ENCODE measurements at regions of chr5 and their contacts with region 1.

Region 1: GRCh38 chr5:165410476-165410875 is 1905.1 kb downstream of the MAT2B start:
- DNase-seq: no peak
- H3K4me3 Mint-ChIP-seq: no peak overlapping the region
- H3K27ac Mint-ChIP-seq: no peak overlapping the region
- H3K4me1 Mint-ChIP-seq: no peaks in the 10 kb centered on the region
- H3K27me3 Mint-ChIP-seq: no peaks in the 10 kb centered on the region
- CTCF ChIP-seq: no peak

Region 2: DNA sequence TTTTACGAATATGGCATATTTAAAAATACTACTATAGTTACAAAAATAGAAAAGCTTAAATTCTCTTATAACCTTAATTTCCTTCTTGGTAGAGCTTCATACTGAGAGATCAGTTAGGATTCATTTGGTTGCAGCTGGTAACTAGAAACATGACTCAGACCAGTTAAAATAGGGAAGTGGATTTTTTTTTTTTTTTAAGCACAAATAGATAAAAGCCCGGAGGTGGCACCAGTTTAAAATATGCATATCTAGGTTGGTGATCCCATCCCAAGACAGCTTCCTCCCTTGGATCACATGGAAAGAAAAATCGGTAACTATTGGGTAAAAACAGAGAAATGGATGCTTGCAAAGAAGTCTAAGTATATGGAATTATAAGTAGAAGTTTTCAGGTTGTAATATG is 270.8 kb before region 1 on chr5:
- CTCF ChIA-PET with region 1: no interaction called
- intact Hi-C with region 1: no loop called
- DNase-seq: no peak
- H3K4me3 Mint-ChIP-seq: no peak overlapping the region
- H3K27ac Mint-ChIP-seq: no peak overlapping the region
- H3K4me1 Mint-ChIP-seq: no peaks in the 10 kb centered on the region
- H3K27me3 Mint-ChIP-seq: no peaks in the 10 kb centered on the region
- CTCF ChIP-seq: no peak

Region 3: GRCh38 chr5:165227511-165227910 is 183.0 kb before region 1 on chr5:
- CTCF ChIA-PET with region 1: no interaction called
- intact Hi-C with region 1: no loop called
- DNase-seq: peak; percentile 14
- H3K4me3 Mint-ChIP-seq: no peak overlapping the region
- H3K27ac Mint-ChIP-seq: no peak overlapping the region
- H3K4me1 Mint-ChIP-seq: no peaks in the 10 kb centered on the region
- H3K27me3 Mint-ChIP-seq: no peaks in the 10 kb centered on the region
- CTCF ChIP-seq: no peak

Region 4: DNA sequence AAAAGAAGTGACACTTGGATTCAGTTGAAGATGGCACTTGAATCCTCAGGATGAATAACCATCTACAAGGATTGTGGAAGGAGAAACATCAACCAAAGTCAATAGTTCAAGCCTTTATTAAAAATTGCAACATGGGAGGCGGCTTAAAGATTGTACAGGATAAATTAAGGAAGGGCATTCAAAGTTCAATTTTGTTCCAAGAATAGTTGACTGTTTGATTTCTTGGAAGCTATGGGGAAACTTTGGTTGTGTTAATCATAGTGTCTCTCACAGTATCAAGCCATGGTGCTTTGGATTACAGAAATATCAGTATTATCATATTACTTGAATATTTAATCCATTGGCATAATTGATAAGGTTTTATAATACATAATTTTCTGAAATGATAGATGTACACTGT is 60.7 kb before region 1 on chr5:
- CTCF ChIA-PET with region 1: no interaction called
- intact Hi-C with region 1: no loop called
- DNase-seq: no peak
- H3K4me3 Mint-ChIP-seq: no peak overlapping the region
- H3K27ac Mint-ChIP-seq: no peak overlapping the region
- H3K4me1 Mint-ChIP-seq: no peaks in the 10 kb centered on the region
- H3K27me3 Mint-ChIP-seq: no peaks in the 10 kb centered on the region
- CTCF ChIP-seq: no peak

Region 5: DNA sequence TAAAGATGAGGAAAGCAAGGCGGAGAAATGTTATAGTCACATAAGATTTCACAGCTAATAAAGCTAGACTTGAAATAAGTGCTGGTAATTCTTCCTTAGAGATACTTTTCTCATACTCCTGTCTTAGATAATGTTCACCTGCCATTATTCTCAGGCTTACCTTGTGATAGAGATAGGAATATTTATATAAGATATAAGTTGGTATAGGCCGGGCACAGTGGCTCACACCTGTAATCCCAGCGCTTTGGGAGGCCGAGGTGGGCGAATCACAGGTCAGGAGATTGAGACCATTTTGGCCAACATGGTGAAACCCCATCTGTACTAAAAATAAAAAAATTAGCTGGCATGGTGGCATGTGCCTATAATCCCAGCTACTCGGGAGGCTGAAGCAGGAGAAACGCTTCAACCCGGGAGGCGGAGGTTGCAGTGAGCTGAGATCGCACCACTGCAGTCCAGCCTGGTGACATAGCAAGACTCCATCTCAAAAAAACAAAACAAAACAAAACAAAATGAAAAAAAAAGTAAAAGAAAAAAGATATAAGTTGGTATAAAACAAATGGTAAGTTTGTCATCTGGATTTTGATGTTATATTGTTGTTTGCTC is 13.3 kb after region 1 on chr5:
- CTCF ChIA-PET with region 1: no interaction called
- intact Hi-C with region 1: loop called (anchors 1 kb)
- DNase-seq: no peak
- H3K4me3 Mint-ChIP-seq: no peak overlapping the region
- H3K27ac Mint-ChIP-seq: no peak overlapping the region
- H3K4me1 Mint-ChIP-seq: no peaks in the 10 kb centered on the region
- H3K27me3 Mint-ChIP-seq: no peaks in the 10 kb centered on the region
- CTCF ChIP-seq: no peak

Measured in Calu3 (cell line).